Right ventricle myocardium inferior (tissue), 1 donor: ENCODE measurements at regions of chr7 and their contacts with region 1.

Region 1: DNA sequence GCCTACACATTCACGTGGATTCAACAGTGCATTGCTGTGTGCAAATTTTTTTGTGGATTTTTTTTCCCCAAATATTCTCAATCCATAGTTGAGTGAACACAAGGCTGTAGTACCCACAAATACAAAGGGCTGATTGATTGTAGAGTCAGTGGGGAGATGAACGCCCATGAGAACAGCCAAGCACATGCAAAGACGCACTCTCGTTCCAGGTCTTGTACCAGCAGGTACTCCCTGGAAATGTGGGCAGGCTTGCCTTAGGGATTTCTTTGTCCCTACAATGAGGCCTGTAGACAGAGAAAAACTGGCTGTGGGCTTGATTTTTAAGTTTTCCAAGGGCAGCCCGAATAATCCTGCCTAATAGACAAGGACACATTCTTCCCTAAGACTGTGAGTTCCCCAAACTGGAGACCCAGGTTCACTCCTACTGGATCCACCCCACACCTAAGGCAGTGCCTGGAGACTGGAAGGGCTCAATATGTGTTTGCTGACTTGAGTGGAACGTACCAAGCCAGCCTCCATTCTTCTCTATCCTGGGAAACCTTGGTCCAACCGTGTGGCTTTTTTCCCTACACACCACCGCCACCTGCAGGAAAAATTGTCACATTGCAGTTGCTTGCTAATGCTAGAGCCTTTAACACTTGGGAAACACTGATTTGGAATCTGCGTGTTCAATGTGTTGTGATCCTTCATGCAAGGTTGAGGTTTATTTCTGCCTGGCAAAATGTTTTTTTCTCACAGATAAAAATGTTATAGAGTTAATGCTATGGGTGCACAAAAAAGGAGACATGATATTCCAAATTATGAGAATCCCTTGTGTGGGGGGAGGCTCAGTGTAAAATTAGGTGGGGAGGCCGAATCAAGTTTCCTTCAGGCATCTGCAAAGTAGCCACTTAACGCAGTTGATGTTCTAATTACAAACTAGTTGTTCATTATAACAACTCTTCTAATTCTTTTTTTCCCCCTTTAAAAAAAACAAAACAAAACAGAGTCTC is 49.3 kb downstream of the PPP1R17 start:
- DNase-seq: no peak
- ATAC-seq: peak; percentile 72

Region 2: DNA sequence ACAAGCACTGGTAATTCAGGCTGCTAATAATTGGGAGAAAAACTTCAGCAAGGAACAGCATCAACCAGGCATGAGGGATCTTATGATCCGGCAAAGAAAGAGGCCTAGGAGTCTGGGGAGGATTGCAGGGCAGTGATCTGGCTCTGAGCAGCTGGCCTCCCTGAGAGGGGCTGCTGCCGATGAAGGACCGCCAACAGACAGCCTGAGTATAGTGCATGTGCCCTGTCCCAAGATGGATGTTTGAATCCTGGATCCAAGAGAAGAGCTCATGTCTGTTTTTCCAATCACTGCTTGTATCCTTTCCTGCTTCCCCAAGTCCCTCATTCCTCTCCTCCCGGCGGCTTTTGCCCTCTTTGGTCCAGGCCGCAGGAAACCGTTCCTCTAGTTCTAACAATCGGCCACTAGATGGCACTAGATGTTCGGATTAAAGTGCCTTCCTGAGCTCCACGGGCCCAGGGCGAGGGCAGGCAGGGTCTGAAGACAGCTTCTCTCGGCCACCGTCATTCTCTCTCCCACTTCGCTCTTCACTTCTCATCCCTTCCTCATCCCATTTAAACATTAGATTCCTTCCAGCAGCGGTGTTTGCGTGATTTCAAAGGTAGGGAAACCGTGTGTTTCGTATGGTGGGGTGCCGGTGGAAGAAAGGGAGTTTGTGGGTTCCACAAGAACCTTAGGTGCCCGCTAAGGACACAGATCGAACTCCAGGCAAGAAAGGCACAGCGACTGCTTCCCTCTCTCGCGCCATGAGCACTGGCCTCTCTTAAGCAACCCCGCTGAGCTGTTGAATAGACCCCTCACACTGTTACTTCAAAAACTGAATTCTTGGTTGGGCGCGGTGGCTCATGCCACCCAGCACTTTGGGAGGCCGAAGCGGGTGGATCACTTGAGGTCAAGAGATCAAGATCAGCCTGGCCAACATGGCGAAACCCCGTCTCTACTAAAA is 601.8 kb before region 1 on chr7:
- intact Hi-C with region 1: loop called (anchors 10 kb)
- DNase-seq: peak; percentile 72
- ATAC-seq: peak; percentile 95

Region 3: GRCh38 chr7:31443457-31443856 is 292.8 kb before region 1 on chr7:
- intact Hi-C with region 1: loop called (anchors 5 kb)
- DNase-seq: no peak
- ATAC-seq: peak; percentile 42

Region 4: GRCh38 chr7:31648288-31648687 is 88.0 kb before region 1 on chr7:
- intact Hi-C with region 1: loop called (anchors 10 kb)
- DNase-seq: no peak
- ATAC-seq: no peak

Region 5: DNA sequence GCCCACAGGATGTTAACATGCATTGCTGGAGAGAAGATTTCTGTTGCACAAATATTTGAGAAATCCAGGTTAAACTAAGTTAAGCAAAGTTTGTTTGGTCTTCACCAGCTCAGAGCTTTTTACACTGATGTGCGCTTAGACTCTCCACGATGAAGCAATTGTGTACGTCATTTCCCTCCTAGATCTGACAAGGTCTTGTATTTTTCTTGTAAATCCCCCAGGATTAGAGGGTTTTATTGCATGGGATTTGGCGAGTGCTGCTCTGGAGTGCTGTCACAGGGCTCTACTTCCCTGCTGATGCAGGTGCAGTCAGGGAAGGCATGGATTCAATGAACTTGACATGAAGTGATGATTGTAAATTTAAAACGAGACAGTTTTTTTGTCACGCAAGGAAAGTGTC is 160.6 kb after region 1 on chr7:
- intact Hi-C with region 1: no loop called
- DNase-seq: no peak
- ATAC-seq: no peak